Activated CD4-positive, alpha-beta T cell treated with anti-CD3 and anti-CD28 coated beads for 36 hours (primary cell): ENCODE measurements at regions of chr11 and their contacts with region 1.

Region 1: GRCh38 chr11:18615628-18616392 is 16.2 kb downstream of the MISFA start:
- DNase-seq: no peak
- ATAC-seq: peak; percentile 83
- H3K4me3 Mint-ChIP-seq: peak overlapping the region; percentile 13
- H3K27ac Mint-ChIP-seq: peak overlapping the region; percentile 91
- H3K4me1 Mint-ChIP-seq: peaks cover 48% of the 10 kb centered on the region
- H3K27me3 Mint-ChIP-seq: no peaks in the 10 kb centered on the region

Region 2: DNA sequence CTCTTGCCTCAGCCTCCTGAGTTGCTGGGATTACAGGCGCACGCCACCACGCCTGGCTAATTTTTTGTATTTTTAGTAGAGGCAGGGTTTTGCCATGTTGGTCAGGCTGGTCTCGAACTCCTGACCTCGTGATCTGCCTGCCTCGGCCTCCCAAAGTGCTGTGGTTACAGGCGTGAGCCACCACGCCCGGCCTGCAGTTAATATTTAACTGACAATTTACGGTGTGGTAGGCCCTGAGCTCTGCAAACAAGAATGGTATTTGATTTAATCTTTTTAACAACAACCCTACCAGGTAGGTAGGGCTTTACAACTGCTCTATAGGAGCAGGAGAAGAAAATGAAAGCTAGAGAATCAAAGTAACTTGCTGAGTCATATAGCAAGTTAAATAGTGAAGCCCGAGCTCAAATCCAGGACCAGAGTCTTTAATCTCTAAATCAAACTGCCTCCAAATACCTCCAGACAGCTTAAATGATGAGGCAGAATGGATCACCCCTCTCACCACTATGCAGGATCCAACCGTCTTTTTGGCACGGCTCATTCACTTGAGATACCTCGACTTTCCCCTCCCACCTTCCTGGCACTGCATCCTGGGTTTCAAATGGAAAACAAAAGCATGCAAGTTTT is 36.7 kb before region 1 on chr11:
- CTCF ChIA-PET with region 1: interaction called, 3 read pairs
- POLR2A ChIA-PET with region 1: no interaction called
- intact Hi-C with region 1: loop called in 1 of 2 experiments (anchors 5 kb)
- DNase-seq: peak; percentile 15
- ATAC-seq: peak; percentile 86
- H3K4me3 Mint-ChIP-seq: no peak overlapping the region
- H3K27ac Mint-ChIP-seq: peak overlapping the region; percentile 3
- H3K4me1 Mint-ChIP-seq: peaks cover 9% of the 10 kb centered on the region
- H3K27me3 Mint-ChIP-seq: no peaks in the 10 kb centered on the region

Region 3: DNA sequence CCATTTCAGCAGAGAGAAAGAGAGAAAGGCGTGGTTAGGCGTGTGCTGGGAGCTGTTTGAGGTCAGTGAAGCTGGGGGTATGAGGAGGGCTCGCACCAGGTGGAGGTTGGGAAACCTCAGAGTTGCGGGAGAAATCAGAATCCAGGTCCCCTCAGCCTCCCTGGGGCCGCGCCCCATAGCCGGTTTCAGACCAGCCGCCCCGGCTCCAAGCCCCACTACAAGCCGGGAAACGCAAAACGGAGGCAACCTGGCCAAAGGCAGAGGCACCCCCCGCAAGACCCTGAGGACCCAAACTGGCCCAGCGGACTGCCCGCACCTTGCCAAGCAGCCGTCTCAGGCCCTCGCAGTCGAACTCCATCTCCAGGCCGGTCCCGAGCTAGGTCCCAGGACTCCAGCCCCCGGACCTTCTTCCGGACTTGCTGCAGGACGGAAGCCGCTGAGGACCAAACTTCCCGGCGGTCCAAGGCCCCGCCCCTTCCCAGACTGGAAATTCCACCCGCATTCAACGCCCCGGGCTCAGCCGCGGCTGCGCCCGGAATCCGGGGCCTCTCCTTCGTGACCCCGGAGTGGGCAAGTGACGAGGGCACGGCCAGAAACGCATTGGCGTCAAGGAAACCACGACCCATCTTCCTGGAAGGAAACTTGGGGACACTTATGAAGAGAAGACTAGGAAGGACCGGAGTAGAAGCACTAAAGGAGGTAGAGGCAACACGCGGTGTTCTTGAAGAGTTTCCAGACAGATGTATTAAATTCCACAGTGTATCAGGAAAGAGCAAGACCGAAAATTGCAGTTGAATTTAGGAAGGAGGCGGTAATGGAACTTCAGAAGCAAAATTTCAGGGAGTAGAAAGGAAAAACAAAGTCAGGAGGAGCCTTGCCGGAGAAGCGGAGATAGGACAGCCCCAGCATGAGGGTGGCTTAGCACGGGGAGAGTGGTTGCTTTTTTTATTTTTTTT is 27.2 kb before region 1 on chr11 and contains the start of gene UEVLD:
- CTCF ChIA-PET with region 1: interaction called, 3 read pairs
- POLR2A ChIA-PET with region 1: no interaction called
- intact Hi-C with region 1: loop called in 1 of 2 experiments (anchors 1 kb)
- DNase-seq: peak; percentile 79
- ATAC-seq: peak; percentile 54
- H3K4me3 Mint-ChIP-seq: no peak within 1 kb of the TSS
- H3K27ac Mint-ChIP-seq: no peak within 1 kb of the TSS
- H3K4me1 Mint-ChIP-seq: peaks cover 12% of the 10 kb centered on the region
- H3K27me3 Mint-ChIP-seq: no peaks in the 10 kb centered on the region
- total RNA-seq, gene UEVLD: 14.3 to 16.0 TPM

Region 4: DNA sequence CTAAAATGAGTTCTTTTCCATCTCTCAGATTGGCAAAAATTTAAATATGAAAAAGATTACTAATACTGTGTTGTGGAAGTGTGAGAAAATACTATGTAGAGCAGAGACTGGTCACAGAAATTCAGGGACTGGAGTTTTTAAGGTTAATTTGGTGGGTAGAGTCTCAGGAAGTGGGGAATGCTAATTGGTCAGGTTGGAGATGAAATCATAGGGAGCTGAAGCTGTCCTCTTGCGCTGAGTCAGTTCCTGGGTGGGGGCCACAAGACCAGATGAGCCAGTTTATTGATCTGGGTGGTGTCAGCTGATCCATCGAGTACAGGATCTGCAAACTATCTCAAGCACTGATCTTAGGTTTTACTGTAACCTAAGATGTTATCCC is 53.4 kb after region 1 on chr11:
- CTCF ChIA-PET with region 1: no interaction called
- POLR2A ChIA-PET with region 1: interaction called, 6 read pairs
- intact Hi-C with region 1: loop called (anchors 1 to 5 kb)
- DNase-seq: peak; percentile 26
- ATAC-seq: peak; percentile 51
- H3K4me3 Mint-ChIP-seq: no peak overlapping the region
- H3K27ac Mint-ChIP-seq: no peak overlapping the region
- H3K4me1 Mint-ChIP-seq: peaks cover 42% of the 10 kb centered on the region
- H3K27me3 Mint-ChIP-seq: no peaks in the 10 kb centered on the region